RWPE1 (cell line): ENCODE measurements at regions of chr10 and their contacts with region 1.

Region 1: DNA sequence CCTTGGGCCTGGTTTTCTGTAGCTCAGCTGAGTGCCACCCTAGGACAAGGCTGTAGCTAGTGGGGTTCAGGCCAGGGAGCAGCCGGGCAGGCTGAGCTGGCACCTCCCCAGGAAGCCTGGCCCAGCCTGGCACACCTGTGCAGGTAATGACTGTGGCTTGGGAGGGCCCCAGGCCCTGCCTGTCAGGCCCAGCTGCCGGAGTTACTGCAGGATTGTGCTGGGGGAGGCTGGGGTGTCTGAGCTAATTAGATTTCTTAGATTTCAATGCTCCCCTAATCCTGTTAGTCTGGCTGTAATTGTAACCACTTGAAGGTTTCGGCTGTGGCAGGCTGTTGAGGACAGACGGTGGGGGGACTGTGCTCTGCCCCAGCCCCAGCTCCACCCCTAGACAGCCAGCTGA is 6.0 kb downstream of the ZMIZ1 start:
- DNase-seq: no peak
- H3K27ac ChIP-seq: peak overlapping the region; percentile 100
- CTCF ChIP-seq: no peak

Region 2: DNA sequence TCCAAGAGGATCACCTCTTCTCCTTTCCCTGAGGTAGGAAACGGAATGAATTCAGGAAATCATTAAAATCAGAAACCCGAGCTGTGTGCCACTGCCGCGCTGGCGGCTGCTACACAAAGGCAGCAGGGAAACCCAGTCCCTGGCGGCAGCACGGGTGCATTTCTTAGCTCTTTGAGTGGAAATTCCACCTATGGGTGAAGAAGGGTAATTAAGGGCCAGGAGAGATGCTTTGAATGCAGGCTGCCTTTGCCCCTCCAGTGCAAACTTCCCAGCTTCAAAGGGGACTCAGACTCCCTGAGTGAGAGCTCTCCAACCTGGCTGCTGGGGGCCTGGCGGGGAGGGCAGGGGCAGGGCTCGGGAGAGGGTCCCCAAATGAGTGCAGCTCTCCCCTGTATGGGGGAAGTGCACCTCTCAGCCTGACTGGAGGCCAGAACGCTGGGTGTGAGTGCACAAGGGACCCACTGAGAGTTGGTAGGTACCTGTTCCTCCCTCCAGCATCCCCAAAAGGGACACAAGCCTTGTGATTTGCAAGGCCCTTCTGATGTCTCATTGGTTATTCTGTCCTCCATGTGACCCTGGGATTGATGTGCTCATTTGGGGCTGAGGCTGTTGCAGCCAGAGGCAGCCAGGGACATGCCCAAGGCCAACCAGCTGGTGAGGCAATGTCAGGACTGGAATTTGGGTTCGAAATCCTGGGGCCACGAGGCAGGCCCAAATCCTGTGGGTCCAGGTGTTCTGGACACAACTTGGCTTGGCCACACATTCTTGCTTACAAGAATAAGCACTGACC is 22.2 kb before region 1 on chr10:
- CTCF ChIA-PET with region 1: no interaction called
- POLR2A ChIA-PET with region 1: no interaction called
- DNase-seq: no peak
- H3K27ac ChIP-seq: peak overlapping the region; percentile 78
- CTCF ChIP-seq: no peak

Region 3: GRCh38 chr10:79127151-79127961 is 52.6 kb after region 1 on chr10:
- CTCF ChIA-PET with region 1: interaction called, 3 read pairs
- POLR2A ChIA-PET with region 1: interaction called, 10 read pairs
- DNase-seq: peak; percentile 74
- H3K27ac ChIP-seq: peak overlapping the region; percentile 79
- CTCF ChIP-seq: no peak